ENCODE measurements at regions of chr7 and their contacts with region 1.

Region 1: GRCh38 chr7:41977151-41977651 is 259.8 kb downstream of the GLI3 start:
- DNase-seq: no peak
- ATAC-seq: peak; percentile 59 to 65
- H3K4me3 ChIP-seq: no peak overlapping the region
- H3K27ac ChIP-seq: no peak overlapping the region
- H3K4me1 ChIP-seq: no peaks in the 10 kb centered on the region
- H3K27me3 ChIP-seq: no peaks in the 10 kb centered on the region

Region 2: GRCh38 chr7:41559426-41559825 is 417.8 kb before region 1 on chr7:
- intact Hi-C with region 1: no loop called
- DNase-seq: no peak
- ATAC-seq: no peak
- H3K4me3 ChIP-seq: no peak overlapping the region
- H3K27ac ChIP-seq: no peak overlapping the region
- H3K4me1 ChIP-seq: no peaks in the 10 kb centered on the region
- H3K27me3 ChIP-seq: no peaks in the 10 kb centered on the region

Region 3: DNA sequence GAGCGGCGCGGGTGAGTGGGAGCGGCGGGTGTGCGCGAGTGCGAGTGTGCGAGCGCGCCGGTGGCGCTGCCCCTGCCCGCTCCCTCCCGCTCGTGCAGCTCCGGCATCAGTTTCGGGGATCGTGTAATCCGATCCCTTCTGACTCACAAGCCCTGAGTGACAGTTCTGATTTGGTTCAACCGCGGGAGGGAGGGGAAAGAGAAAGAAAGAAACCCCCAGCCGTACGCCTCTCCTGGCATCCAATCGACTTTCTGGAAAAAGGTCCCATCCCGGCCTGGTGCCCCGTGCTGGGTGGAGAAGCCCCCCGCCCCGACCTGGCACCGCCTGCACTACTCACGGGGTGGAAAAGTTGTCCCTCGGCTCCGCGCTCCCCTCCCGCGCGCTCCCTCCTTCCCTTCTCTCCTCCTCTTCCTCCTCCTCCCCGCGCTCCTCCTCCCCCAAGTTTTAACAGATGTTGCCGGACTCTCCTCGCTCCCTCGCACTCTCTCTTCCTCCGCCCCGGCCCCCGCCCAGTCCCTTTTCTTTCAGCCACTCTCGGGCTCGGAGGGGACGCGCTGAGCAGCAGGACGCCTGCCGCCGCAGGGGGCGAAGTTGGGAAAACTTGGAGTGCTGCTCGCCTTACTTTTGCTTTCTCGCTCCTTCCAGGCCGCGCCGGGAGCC is 260.1 kb after region 1 on chr7 and contains the start of gene GLI3:
- intact Hi-C with region 1: loop called in 1 of 4 experiments (anchors 5 kb)
- DNase-seq: peak; percentile 86 to 93 (median 92)
- ATAC-seq: peak; percentile 92
- H3K4me3 ChIP-seq: peak within 1 kb of the TSS; percentile 79
- H3K27ac ChIP-seq: peak within 1 kb of the TSS; percentile 83
- H3K4me1 ChIP-seq: no peaks in the 10 kb centered on the region
- H3K27me3 ChIP-seq: no peaks in the 10 kb centered on the region
- total RNA-seq, gene GLI3: 2.4 to 3.5 (median 2.8) TPM

Region 4: DNA sequence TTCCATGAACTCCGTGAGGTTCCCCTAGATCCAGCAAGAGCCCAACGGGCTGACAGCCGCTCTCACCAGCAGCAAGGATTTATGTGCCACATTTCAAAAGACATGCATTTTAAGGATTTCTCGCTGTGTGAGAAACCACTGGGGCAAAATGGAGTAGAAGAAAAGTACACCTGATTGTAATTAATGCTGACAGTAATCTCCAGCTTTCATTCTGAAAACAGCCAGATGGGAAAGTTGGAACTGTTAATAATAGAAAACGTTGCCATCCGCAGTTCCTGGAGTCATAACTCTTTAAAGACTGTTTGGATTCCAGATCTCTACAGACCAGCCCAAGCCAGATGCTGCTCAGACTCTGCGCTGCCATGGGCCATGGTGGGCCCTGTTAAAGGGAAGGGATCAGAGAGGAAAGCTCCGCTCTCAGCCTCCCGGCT is 476.7 kb after region 1 on chr7:
- intact Hi-C with region 1: no loop called
- DNase-seq: no peak
- ATAC-seq: no peak
- H3K4me3 ChIP-seq: no peak overlapping the region
- H3K27ac ChIP-seq: no peak overlapping the region
- H3K4me1 ChIP-seq: no peaks in the 10 kb centered on the region
- H3K27me3 ChIP-seq: no peaks in the 10 kb centered on the region

Measured in right cardiac atrium (tissue), 5 donors.